Heart left ventricle (tissue), 16 donors: ENCODE measurements at regions of chr9 and their contacts with region 1.

Region 1: DNA sequence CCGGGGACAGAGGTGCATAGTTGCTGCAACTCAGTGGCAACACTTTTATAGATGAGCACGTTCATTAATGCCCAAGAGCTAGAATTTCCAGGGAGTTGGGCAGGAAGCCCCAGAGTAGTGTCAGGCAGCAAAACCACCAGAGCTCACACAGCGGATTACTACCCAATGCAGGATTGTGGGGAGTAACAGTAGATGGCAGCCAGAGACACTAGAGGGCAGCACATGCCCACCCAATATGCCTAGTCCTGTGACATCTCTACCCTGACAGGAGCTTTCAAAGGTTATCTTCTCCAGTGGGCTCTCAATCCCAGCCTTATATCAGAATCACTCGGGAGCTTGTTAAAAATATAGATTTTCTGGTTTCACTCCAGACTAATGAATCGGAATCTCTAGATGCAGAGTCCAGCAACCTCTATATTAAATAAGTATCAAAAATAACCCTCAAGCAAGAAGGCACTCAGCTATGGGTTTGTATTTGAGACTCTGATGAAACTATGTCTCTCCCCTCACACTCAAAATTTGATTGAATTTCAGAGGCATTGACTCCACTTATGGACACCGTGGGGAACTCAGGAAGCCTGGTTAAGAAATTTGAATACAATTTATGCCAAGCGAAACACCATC is 58.4 kb upstream of the PHF24 start:
- DNase-seq: peak; percentile 71 to 81 (median 77)
- ATAC-seq: peak; percentile 92 to 100 (median 98)
- H3K4me3 ChIP-seq: no peak overlapping the region
- H3K27ac ChIP-seq: no peak overlapping the region
- H3K4me1 ChIP-seq: no peaks in the 10 kb centered on the region
- H3K27me3 ChIP-seq: peaks cover 0 to 25% (median 8%) of the 10 kb centered on the region in 9 donors
- CTCF ChIP-seq: peak; percentile 69 to 89 (median 83)
- POLR2A ChIP-seq: no peak

Region 2: GRCh38 chr9:34862043-34862442 is 37.6 kb before region 1 on chr9:
- intact Hi-C with region 1: no loop called
- DNase-seq: no peak
- ATAC-seq: no peak
- H3K4me3 ChIP-seq: no peak overlapping the region
- H3K27ac ChIP-seq: no peak overlapping the region
- H3K4me1 ChIP-seq: peaks cover 0 to 2% (median 0%) of the 10 kb centered on the region in 12 donors
- H3K27me3 ChIP-seq: peaks cover 0 to 5% (median 0%) of the 10 kb centered on the region in 9 donors
- CTCF ChIP-seq: no peak
- POLR2A ChIP-seq: no peak

Region 3: DNA sequence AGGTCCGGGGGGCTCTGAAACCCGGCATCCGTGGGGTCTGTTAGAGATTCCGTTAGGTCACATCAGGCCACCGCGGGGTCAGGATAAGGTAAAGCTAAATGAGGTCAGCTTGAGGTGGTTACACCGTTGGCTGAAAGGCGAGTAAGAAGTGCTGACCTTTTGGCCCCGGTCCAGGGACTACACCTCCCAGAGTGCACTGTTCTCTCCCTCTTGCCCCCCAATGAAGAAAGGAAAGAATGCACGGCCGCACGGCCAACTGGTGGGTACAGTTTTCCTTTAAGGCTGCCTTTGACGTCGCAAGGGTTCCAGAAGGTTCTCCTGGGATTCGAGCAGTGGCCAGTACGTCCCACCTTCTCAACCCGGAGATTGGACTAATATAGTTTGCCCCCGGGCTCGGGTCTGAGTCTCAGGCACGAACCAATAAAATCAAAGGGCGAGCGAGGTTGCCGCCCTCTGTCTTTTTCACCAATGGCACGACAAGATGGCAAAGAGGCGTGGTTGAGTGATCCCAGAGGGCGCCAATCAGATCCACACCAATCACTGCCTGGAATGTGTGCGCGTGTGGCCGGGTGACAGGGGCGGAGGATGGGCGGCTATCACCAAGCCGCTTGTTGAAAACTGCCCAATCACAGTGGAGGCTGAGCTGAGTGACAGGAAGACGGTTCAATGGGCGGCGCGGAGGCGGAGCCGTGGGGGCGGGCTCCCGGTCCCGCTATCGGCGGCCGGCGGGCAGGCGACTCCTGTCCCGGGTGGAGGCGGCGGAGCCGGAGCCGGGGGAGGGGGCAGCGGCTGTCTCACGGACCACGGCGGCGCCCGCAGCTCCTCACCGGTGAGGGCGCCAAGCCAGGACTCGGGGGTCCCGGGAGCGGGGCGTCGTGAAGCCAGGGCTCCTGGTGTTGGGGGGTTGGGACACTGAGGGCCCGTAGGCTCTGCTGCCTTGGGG is 89.6 kb after region 1 on chr9 and contains the start of gene DNAJB5:
- intact Hi-C with region 1: loop called in 9 of 10 experiments (anchors 2 to 5 kb)
- DNase-seq: peak; percentile 98 to 100 (median 99)
- ATAC-seq: peak; percentile 76 to 86 (median 84)
- H3K4me3 ChIP-seq: peak within 1 kb of the TSS; percentile 65 to 98 (median 82)
- H3K27ac ChIP-seq: peak within 1 kb of the TSS in 11 of 12 donors; percentile 86 to 99 (median 97)
- H3K4me1 ChIP-seq: peaks cover 8 to 54% (median 46%) of the 10 kb centered on the region in 12 donors
- H3K27me3 ChIP-seq: no peaks in the 10 kb centered on the region
- CTCF ChIP-seq: peak in 1 of 12 donors; percentile 17
- POLR2A ChIP-seq: peak; percentile 89 to 93
- total RNA-seq, gene DNAJB5: 33.6 to 134 (median 88.5) TPM

Region 4: GRCh38 chr9:35051069-35051967 is 151.7 kb after region 1 on chr9:
- intact Hi-C with region 1: loop called in 3 of 10 experiments (anchors 2 to 5 kb)
- DNase-seq: peak in 3 of 5 donors; percentile 30 to 45 (median 42)
- ATAC-seq: peak; percentile 84 to 90 (median 89)
- H3K4me3 ChIP-seq: no peak overlapping the region
- H3K27ac ChIP-seq: peak overlapping the region in 9 of 12 donors; percentile 2 to 58 (median 40)
- H3K4me1 ChIP-seq: peaks cover 0 to 13% (median 2%) of the 10 kb centered on the region in 12 donors
- H3K27me3 ChIP-seq: no peaks in the 10 kb centered on the region
- CTCF ChIP-seq: peak; percentile 46 to 74 (median 64)
- POLR2A ChIP-seq: no peak

Region 5: GRCh38 chr9:35096035-35096849 is 196.6 kb after region 1 on chr9 and contains the start of gene PIGO:
- intact Hi-C with region 1: loop called (anchors 2 to 5 kb)
- DNase-seq: peak; percentile 88 to 95 (median 91)
- ATAC-seq: peak; percentile 73 to 96 (median 94)
- H3K4me3 ChIP-seq: peak within 1 kb of the TSS; percentile 53 to 100 (median 90)
- H3K27ac ChIP-seq: peak within 1 kb of the TSS; percentile 86 to 99 (median 96)
- H3K4me1 ChIP-seq: peaks cover 0 to 16% (median 9%) of the 10 kb centered on the region in 12 donors
- H3K27me3 ChIP-seq: no peaks in the 10 kb centered on the region
- CTCF ChIP-seq: peak; percentile 57 to 79 (median 74)
- POLR2A ChIP-seq: peak in 1 of 2 donors; percentile 37
- total RNA-seq, gene PIGO: 7.0 to 13.1 (median 9.1) TPM

Region 6: GRCh38 chr9:35470894-35471293 is 571.2 kb after region 1 on chr9:
- intact Hi-C with region 1: loop called in 6 of 10 experiments (anchors 5 to 10 kb)
- DNase-seq: no peak
- ATAC-seq: no peak
- H3K4me3 ChIP-seq: no peak overlapping the region
- H3K27ac ChIP-seq: no peak overlapping the region
- H3K4me1 ChIP-seq: no peaks in the 10 kb centered on the region
- H3K27me3 ChIP-seq: no peaks in the 10 kb centered on the region
- CTCF ChIP-seq: no peak
- POLR2A ChIP-seq: no peak